B cell (primary cell): ENCODE measurements at regions of chr19 and their contacts with region 1.

Region 1: DNA sequence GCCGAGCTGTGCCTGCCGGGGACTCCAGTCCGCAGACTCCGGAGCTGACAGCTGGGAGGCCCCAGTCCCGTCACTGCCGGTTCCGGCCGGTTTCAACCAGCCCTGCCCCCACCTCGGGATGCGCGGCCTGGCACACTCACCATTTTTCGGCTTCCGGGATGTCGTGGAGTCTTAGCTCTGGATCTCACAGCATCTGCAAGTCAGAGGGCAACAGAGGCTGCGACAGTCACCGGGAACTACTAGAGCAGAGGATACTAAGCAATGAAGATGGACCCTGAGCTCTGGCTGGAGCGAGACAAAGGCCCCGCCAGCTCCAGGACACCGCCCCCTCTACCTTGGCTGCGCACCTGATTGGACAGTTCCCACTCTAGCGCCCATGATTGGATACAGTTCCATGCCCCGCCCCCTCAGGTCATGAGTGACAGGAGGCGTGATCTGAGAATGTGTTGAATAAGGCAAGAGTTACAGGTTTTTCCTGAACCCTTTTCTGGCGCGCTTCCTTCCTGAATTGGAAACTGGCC is at the start of gene ZNF682:
- DNase-seq: peak; percentile 96
- ATAC-seq: peak; percentile 100
- H3K4me3 ChIP-seq: peak within 1 kb of the TSS; percentile 30 to 91 (median 83)
- H3K4me3 Mint-ChIP-seq: peak within 1 kb of the TSS; percentile 99
- H3K27ac ChIP-seq: peak within 1 kb of the TSS; percentile 70 to 72
- H3K27ac Mint-ChIP-seq: peak within 1 kb of the TSS; percentile 97
- H3K4me1 ChIP-seq: peaks cover 0 to 9% of the 10 kb centered on the region in 2 donors
- H3K4me1 Mint-ChIP-seq: peaks cover 15% of the 10 kb centered on the region
- H3K27me3 ChIP-seq: peaks cover 0 to 5% (median 0%) of the 10 kb centered on the region in 4 experiments
- H3K27me3 Mint-ChIP-seq: no peaks in the 10 kb centered on the region
- CTCF ChIP-seq: no peak
- total RNA-seq, gene ZNF682: 11.3 and 16.0 TPM in 2 replicates

Region 2: GRCh38 chr19:19776041-19777008 is 262.9 kb before region 1 on chr19:
- CTCF ChIA-PET with region 1: no interaction called
- POLR2A ChIA-PET with region 1: no interaction called
- intact Hi-C with region 1: loop called (anchors 10 kb)
- DNase-seq: peak; percentile 94
- ATAC-seq: peak; percentile 99
- H3K4me3 ChIP-seq: peak overlapping the region; percentile 71 to 94 (median 90)
- H3K4me3 Mint-ChIP-seq: peak overlapping the region; percentile 97
- H3K27ac ChIP-seq: peak overlapping the region; percentile 8 to 78
- H3K27ac Mint-ChIP-seq: peak overlapping the region; percentile 91
- H3K4me1 ChIP-seq: peaks cover 17 to 24% of the 10 kb centered on the region in 2 donors
- H3K4me1 Mint-ChIP-seq: peaks cover 35% of the 10 kb centered on the region
- H3K27me3 ChIP-seq: no peaks in the 10 kb centered on the region
- H3K27me3 Mint-ChIP-seq: no peaks in the 10 kb centered on the region
- CTCF ChIP-seq: no peak

Region 3: DNA sequence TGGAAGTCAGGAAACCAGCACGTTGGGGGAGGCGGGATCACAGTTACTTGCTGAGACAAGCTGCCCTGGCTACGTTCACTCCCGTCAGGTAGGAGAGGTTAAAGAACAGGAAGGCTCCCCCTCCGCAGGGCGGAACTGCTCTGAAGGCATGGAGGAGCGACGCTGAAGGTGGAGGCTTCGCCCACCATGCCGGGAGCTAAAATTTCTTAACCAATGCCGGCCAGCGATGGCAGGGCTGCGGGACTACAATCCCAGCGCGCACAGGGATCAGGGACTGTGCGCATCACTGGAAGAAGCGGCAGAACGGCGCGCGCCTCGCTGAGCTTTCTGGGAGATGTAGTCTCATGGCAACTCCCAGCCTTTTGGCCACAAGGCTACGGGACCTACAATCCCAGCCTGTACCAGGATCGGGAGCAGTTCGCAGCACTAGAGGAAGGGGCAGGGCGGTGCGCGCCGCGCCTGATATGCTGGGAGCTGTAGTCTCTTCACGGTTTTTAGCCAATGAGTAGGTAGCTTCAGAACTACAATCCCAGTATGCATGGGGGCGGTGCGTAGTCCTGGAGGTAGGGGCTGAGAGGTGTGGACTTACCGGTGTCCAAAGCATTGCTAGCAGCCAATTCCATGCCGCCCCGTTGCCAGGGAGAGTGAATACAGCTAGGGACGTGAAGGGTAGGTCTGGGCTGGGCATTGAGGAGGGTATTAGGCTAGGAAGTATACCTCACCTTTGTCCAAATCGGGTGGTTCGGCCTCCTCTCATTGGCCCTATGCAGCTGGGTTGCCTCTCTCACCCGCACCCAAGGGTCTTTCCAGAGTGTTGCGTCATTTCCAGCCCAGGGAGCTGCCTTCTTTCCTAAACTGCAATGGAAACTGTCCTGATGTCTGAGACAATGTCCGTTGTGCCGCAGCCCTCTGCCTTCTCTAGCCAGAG is 12.8 kb after region 1 on chr19:
- CTCF ChIA-PET with region 1: interaction called, 5 read pairs
- POLR2A ChIA-PET with region 1: interaction called, 15 read pairs
- intact Hi-C with region 1: loop called (anchors 1 kb)
- DNase-seq: peak; percentile 77
- ATAC-seq: peak; percentile 95
- H3K4me3 ChIP-seq: peak overlapping the region; percentile 75 to 90 (median 84)
- H3K4me3 Mint-ChIP-seq: peak overlapping the region; percentile 98
- H3K27ac ChIP-seq: peak overlapping the region; percentile 63 to 77
- H3K27ac Mint-ChIP-seq: peak overlapping the region; percentile 94
- H3K4me1 ChIP-seq: peaks cover 4 to 13% of the 10 kb centered on the region in 2 donors
- H3K4me1 Mint-ChIP-seq: peaks cover 14% of the 10 kb centered on the region
- H3K27me3 ChIP-seq: no peaks in the 10 kb centered on the region
- H3K27me3 Mint-ChIP-seq: no peaks in the 10 kb centered on the region
- CTCF ChIP-seq: no peak

Region 4: GRCh38 chr19:20237761-20238623 is 198.7 kb after region 1 on chr19:
- CTCF ChIA-PET with region 1: no interaction called
- POLR2A ChIA-PET with region 1: no interaction called
- intact Hi-C with region 1: loop called (anchors 1 kb)
- DNase-seq: peak; percentile 91
- ATAC-seq: peak; percentile 85
- H3K4me3 ChIP-seq: peak overlapping the region; percentile 58 to 89 (median 82)
- H3K4me3 Mint-ChIP-seq: peak overlapping the region; percentile 100
- H3K27ac ChIP-seq: peak overlapping the region; percentile 22 to 73
- H3K27ac Mint-ChIP-seq: peak overlapping the region; percentile 87
- H3K4me1 ChIP-seq: peaks cover 3 to 22% of the 10 kb centered on the region in 2 donors
- H3K4me1 Mint-ChIP-seq: peaks cover 29% of the 10 kb centered on the region
- H3K27me3 ChIP-seq: no peaks in the 10 kb centered on the region
- H3K27me3 Mint-ChIP-seq: no peaks in the 10 kb centered on the region
- CTCF ChIP-seq: no peak

Region 5: DNA sequence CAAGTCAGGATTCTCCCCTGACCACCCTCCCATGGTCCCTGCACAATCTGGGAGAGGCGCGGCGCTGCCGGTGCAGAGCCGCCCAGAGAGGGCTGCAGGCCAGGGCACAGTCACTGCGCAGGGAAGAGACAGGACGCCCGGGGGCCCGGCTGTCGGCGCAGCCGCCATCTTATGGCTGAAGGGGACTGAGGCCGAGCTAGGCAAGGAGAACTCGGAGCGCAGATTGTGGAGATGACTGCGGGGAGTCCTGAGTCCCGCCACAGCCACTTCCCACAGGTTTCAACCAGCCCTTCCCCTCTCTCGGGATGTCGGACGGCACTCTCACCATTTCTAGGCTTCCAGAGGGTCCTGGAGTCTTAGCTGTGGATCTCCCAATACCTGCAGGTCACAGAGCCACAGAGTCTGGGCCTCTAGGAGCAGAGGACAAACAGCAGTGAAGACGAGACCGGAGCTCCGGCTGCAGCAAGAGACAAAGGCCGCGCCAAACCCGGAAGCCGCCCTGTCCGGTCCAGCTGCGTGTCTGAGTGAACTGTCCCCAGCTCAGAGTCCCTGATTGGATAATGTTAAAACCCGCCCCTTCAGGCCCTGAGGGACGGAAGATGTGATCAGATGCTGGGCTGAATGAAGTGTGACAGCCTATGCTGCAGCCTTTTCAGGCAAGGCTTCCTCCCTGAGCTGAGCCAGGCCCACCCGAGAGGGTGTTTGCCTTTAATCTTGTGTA is 1289.8 kb after region 1 on chr19 and contains the start of gene ZNF708:
- CTCF ChIA-PET with region 1: no interaction called
- POLR2A ChIA-PET with region 1: no interaction called
- intact Hi-C with region 1: loop called (anchors 5 kb)
- DNase-seq: peak; percentile 88
- ATAC-seq: peak; percentile 99
- H3K4me3 ChIP-seq: peak within 1 kb of the TSS; percentile 85 to 100 (median 96)
- H3K4me3 Mint-ChIP-seq: peak within 1 kb of the TSS; percentile 99
- H3K27ac ChIP-seq: peak within 1 kb of the TSS; percentile 97 to 99
- H3K27ac Mint-ChIP-seq: peak within 1 kb of the TSS; percentile 99
- H3K4me1 ChIP-seq: peaks cover 9 to 16% of the 10 kb centered on the region in 2 donors
- H3K4me1 Mint-ChIP-seq: peaks cover 39% of the 10 kb centered on the region
- H3K27me3 ChIP-seq: no peaks in the 10 kb centered on the region
- H3K27me3 Mint-ChIP-seq: no peaks in the 10 kb centered on the region
- CTCF ChIP-seq: no peak
- total RNA-seq, gene ZNF708: 37.7 and 38.2 TPM in 2 replicates